Heart left ventricle (tissue), 16 donors: ENCODE measurements at regions of chr4 and their contacts with region 1.

Region 1: DNA sequence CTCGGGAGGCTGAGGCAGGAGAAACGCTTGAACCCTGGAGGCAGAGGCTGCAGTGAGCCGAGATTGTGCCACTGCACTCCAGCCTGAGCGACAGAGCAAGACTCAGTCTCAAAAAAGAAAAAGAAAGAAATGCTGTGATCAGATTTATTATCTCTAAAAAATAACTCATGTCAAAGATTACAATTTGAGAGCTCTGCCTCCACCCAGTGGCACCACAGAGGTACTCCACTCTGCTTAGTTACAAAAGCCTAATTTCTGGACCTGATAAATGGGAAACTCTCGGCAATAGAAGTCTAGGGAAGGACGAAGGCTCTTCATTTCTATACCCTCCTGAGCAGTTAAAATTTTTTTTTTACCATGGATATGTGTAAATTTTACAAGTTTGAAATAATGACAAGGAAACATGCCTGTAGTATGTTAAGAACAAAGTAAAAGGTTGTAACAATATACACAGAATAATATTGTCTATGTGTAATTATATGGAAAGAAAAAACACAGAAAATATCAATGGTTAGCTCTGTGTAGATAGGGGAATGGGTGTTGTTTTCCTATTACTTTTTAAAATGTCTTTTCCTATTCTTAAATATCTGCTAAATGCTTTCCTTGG is 149.8 kb downstream of the STIM2 start:
- DNase-seq: peak; percentile 36 to 60 (median 51)
- ATAC-seq: peak in 3 of 4 donors; percentile 75 to 87 (median 77)
- H3K4me3 ChIP-seq: no peak overlapping the region
- H3K27ac ChIP-seq: no peak overlapping the region
- H3K4me1 ChIP-seq: peaks cover 0 to 17% (median 0%) of the 10 kb centered on the region in 12 donors
- H3K27me3 ChIP-seq: no peaks in the 10 kb centered on the region
- CTCF ChIP-seq: peak; percentile 82 to 94 (median 90)
- POLR2A ChIP-seq: no peak

Region 2: GRCh38 chr4:26459054-26459755 is 551.2 kb before region 1 on chr4:
- intact Hi-C with region 1: loop called (anchors 1 to 10 kb)
- DNase-seq: no peak
- ATAC-seq: peak in 2 of 4 donors; percentile 59 to 60
- H3K4me3 ChIP-seq: no peak overlapping the region
- H3K27ac ChIP-seq: peak overlapping the region in 1 of 12 donors; percentile 29
- H3K4me1 ChIP-seq: peaks cover 0 to 6% (median 0%) of the 10 kb centered on the region in 12 donors
- H3K27me3 ChIP-seq: no peaks in the 10 kb centered on the region
- CTCF ChIP-seq: peak; percentile 38 to 68 (median 57)
- POLR2A ChIP-seq: no peak

Region 3: DNA sequence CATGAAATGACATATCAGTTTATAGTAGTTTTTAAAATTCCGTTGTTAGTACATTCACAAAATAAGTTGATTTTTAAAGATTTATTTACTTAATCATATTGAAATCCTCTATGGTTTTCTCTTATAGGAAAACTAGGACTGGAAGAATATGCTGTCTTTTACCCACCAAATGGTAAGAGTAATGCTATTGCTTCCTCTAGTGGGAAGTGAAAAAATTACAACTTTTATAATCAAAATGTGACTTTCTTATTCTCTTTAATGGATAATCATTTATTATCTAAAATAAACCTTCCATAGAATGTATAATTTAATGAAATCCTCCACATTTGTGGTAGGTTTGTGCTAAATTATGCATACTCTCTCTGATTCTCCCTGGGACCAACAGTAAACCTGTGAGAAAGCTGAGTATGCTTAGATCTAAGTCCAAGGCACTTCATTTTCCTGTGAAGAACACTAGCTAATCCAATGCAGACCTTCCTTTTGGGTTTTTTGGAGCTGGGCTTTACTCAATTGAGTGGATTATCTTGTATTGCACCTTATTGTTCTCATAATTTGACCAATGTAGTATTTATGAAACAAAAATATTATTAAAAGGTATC is 290.4 kb before region 1 on chr4:
- intact Hi-C with region 1: loop called in 2 of 10 experiments (anchors 10 kb)
- DNase-seq: no peak
- ATAC-seq: no peak
- H3K4me3 ChIP-seq: no peak overlapping the region
- H3K27ac ChIP-seq: no peak overlapping the region
- H3K4me1 ChIP-seq: peaks cover 0 to 2% (median 0%) of the 10 kb centered on the region in 12 donors
- H3K27me3 ChIP-seq: no peaks in the 10 kb centered on the region
- CTCF ChIP-seq: peak; percentile 38 to 79 (median 56)
- POLR2A ChIP-seq: no peak

Region 4: GRCh38 chr4:26787461-26788340 is 222.7 kb before region 1 on chr4:
- intact Hi-C with region 1: loop called in 6 of 10 experiments (anchors 5 to 10 kb)
- DNase-seq: peak; percentile 42 to 67 (median 53)
- ATAC-seq: peak; percentile 52 to 83 (median 75)
- H3K4me3 ChIP-seq: peak overlapping the region in 1 of 12 donors; percentile 11
- H3K27ac ChIP-seq: peak overlapping the region in 10 of 12 donors; percentile 25 to 66 (median 52)
- H3K4me1 ChIP-seq: peaks cover 0 to 28% (median 18%) of the 10 kb centered on the region in 12 donors
- H3K27me3 ChIP-seq: no peaks in the 10 kb centered on the region
- CTCF ChIP-seq: peak; percentile 32 to 63 (median 45)
- POLR2A ChIP-seq: no peak